Naive thymus-derived CD4-positive, alpha-beta T cell (primary cell): ENCODE measurements at regions of chr6 and their contacts with region 1.

Region 1: GRCh38 chr6:36979347-36979742 is 6.7 kb downstream of the MTCH1 start:
- DNase-seq: peak in 6 of 9 donors; percentile 36 to 62 (median 48)
- ATAC-seq: peak; percentile 70
- H3K4me3 ChIP-seq: no peak overlapping the region
- H3K4me3 Mint-ChIP-seq: peak overlapping the region in 2 of 10 donors; percentile 2 to 20
- H3K27ac ChIP-seq: no peak overlapping the region
- H3K27ac Mint-ChIP-seq: peak overlapping the region; percentile 44 to 88 (median 80)
- H3K4me1 ChIP-seq: peaks cover 13 to 20% of the 10 kb centered on the region in 2 donors
- H3K4me1 Mint-ChIP-seq: peaks cover 0 to 33% (median 27%) of the 10 kb centered on the region in 7 donors
- H3K27me3 ChIP-seq: no peaks in the 10 kb centered on the region
- H3K27me3 Mint-ChIP-seq: no peaks in the 10 kb centered on the region

Region 2: DNA sequence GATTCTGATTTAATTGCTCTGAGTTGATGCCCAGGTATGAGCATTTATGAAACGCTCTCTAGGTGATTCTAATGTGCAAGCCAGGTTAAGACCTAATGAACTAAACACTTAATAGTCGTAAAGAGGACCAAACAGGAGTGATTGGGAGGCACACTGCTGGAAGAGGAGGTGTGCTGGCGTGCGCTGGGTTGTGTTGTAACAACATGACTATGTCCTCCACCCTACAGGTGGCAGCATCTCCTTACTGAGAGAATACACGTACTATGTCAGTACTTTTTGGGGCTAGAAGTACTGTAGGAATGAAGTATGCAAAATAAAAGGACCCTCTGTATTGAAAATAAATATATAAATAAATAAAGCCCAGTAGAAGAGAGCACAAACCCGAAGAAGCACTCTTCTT is 81.7 kb before region 1 on chr6:
- CTCF ChIA-PET with region 1: no interaction called
- POLR2A ChIA-PET with region 1: interaction called, 3 read pairs
- intact Hi-C with region 1: loop called in 1 of 2 experiments (anchors 1 kb)
- DNase-seq: peak in 5 of 9 donors; percentile 9 to 37 (median 21)
- ATAC-seq: peak; percentile 59
- H3K4me3 ChIP-seq: no peak overlapping the region
- H3K4me3 Mint-ChIP-seq: no peak overlapping the region
- H3K27ac ChIP-seq: no peak overlapping the region
- H3K27ac Mint-ChIP-seq: peak overlapping the region in 3 of 9 donors; percentile 54 to 76 (median 62)
- H3K4me1 ChIP-seq: no peaks in the 10 kb centered on the region
- H3K4me1 Mint-ChIP-seq: peaks cover 0 to 29% (median 10%) of the 10 kb centered on the region in 7 donors
- H3K27me3 ChIP-seq: no peaks in the 10 kb centered on the region
- H3K27me3 Mint-ChIP-seq: no peaks in the 10 kb centered on the region

Region 3: DNA sequence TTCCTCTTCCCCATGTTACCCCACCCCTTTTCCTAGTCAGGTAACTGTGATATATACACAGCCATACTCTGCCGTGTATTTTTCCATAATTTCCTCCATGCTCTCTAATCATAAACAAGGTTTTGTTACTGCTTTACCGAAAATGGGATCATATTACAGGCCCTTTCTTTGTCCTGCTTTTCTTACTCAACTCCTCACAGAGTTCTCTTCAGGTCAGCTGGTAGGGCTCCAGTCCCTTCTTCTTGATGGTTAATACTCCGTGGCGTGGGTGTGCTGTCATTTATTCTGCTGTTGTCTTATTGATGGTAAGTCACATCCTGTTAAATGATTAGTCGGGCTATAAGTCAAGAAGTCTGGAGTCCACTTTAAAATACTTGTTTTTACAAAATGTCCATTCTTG is 49.7 kb before region 1 on chr6:
- CTCF ChIA-PET with region 1: no interaction called
- POLR2A ChIA-PET with region 1: no interaction called
- intact Hi-C with region 1: no loop called
- DNase-seq: no peak
- ATAC-seq: no peak
- H3K4me3 ChIP-seq: no peak overlapping the region
- H3K4me3 Mint-ChIP-seq: no peak overlapping the region
- H3K27ac ChIP-seq: no peak overlapping the region
- H3K27ac Mint-ChIP-seq: peak overlapping the region in 3 of 9 donors; percentile 3 to 33 (median 32)
- H3K4me1 ChIP-seq: no peaks in the 10 kb centered on the region
- H3K4me1 Mint-ChIP-seq: peaks cover 0 to 25% (median 0%) of the 10 kb centered on the region in 7 donors
- H3K27me3 ChIP-seq: no peaks in the 10 kb centered on the region
- H3K27me3 Mint-ChIP-seq: peaks cover 0 to 2% (median 0%) of the 10 kb centered on the region in 5 donors